ENCODE measurements at regions of chr14 and their contacts with region 1.

Region 1: GRCh38 chr14:100285021-100285912 is 21.0 kb downstream of the SLC25A29 start:
- DNase-seq: peak; percentile 81
- H3K4me3 Mint-ChIP-seq: peak overlapping the region; percentile 78
- H3K27ac Mint-ChIP-seq: no peak overlapping the region
- H3K4me1 Mint-ChIP-seq: peaks cover 11% of the 10 kb centered on the region
- H3K27me3 Mint-ChIP-seq: no peaks in the 10 kb centered on the region

Region 2: DNA sequence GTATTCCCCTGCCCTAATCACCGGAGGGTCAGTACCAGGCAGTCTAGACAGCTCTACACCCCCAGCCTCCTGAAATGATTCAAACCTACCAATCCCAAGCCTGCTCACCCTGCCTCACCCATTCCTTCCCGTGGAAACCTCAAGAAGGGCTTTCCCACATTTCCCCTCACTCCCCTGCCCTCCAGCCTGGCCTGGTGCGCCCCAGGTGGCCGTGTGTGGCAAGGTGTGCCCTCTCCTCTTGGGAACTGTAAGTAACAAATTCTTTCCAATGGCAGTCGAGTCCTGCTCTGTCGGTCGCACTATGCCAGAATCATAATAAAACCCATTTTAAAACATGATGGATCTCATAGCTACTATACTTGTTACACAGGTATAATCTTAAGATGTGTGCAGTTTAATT is 111.9 kb before region 1 on chr14:
- CTCF ChIA-PET with region 1: no interaction called
- POLR2A ChIA-PET with region 1: no interaction called
- DNase-seq: no peak
- H3K4me3 Mint-ChIP-seq: no peak overlapping the region
- H3K27ac Mint-ChIP-seq: no peak overlapping the region
- H3K4me1 Mint-ChIP-seq: peaks cover 1% of the 10 kb centered on the region
- H3K27me3 Mint-ChIP-seq: peaks cover 17% of the 10 kb centered on the region

Region 3: DNA sequence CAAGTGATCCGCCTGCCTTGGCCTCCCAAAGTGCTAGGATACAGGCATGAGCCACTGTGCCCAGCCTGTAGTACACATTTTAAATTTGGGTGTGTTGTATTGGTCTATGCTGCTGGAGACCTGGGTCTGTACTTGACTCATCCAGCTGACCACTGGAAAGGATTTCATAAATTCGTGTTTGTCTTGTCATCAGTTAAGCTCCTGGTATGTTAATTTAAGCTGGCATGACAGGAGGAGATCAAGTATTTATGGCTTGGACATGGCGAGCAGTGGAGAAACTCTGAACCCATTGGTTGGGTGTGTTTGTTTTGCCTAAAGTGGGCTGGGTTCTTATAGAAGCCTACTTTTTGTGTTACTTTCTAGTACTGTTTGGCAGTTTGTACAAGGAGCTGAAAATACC is 22.1 kb before region 1 on chr14:
- CTCF ChIA-PET with region 1: interaction called, 16 read pairs
- POLR2A ChIA-PET with region 1: interaction called, 4 read pairs
- DNase-seq: no peak
- H3K4me3 Mint-ChIP-seq: no peak overlapping the region
- H3K27ac Mint-ChIP-seq: peak overlapping the region; percentile 16
- H3K4me1 Mint-ChIP-seq: peaks cover 59% of the 10 kb centered on the region
- H3K27me3 Mint-ChIP-seq: no peaks in the 10 kb centered on the region

Region 4: DNA sequence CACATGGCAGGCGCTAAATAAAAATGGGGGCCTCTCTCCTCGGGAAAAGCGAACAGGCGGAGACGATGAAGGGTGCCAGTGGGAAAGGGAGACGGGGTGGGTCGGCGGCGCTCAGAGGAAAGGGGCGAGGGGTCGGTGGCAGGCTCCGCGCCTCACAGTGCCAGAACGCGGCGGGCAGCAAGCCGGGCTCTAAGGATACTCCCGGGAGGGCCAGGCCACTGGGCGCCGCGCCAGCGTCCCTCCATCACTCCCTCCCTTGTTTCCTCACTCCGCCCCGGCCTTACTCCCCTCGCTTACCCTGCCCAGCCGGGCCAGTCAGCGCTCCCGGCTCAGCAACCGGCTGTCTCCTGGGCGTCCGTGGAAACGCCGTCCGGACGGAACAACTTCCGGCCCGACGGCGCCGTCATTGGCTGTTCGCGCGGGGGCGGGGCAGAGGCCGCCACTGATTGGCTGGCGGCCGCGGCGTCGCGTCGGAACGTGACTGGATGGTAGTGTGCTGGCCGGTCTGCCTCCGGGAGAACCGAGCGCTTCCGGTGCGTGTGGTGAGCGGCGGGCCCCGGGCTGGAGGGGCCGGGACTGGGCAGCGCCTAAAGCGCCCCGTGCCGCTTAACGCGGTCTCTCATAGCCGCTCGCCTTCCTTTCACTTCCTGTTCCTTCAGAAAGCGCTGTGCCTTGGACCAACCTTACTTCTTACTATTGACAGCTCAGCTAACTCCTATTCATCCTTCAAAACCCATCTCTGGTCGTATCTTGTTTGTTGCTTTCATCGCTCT is 90.9 kb after region 1 on chr14:
- CTCF ChIA-PET with region 1: interaction called, 22 read pairs
- POLR2A ChIA-PET with region 1: interaction called, 5 read pairs
- DNase-seq: peak; percentile 95
- H3K4me3 Mint-ChIP-seq: peak within 1 kb of the TSS; percentile 96
- H3K27ac Mint-ChIP-seq: peak within 1 kb of the TSS; percentile 99
- H3K4me1 Mint-ChIP-seq: peaks cover 49% of the 10 kb centered on the region
- H3K27me3 Mint-ChIP-seq: no peaks in the 10 kb centered on the region

Measured in activated CD4-positive, alpha-beta memory T cell treated with anti-CD3 and anti-CD28 coated beads, Interleukin-2, amount 10 ng/mL, durations not matched to agents 7 days and 5 days (primary cell).